CD14-positive monocyte (primary cell): ENCODE measurements at regions of chr12 and their contacts with region 1.

Region 1: DNA sequence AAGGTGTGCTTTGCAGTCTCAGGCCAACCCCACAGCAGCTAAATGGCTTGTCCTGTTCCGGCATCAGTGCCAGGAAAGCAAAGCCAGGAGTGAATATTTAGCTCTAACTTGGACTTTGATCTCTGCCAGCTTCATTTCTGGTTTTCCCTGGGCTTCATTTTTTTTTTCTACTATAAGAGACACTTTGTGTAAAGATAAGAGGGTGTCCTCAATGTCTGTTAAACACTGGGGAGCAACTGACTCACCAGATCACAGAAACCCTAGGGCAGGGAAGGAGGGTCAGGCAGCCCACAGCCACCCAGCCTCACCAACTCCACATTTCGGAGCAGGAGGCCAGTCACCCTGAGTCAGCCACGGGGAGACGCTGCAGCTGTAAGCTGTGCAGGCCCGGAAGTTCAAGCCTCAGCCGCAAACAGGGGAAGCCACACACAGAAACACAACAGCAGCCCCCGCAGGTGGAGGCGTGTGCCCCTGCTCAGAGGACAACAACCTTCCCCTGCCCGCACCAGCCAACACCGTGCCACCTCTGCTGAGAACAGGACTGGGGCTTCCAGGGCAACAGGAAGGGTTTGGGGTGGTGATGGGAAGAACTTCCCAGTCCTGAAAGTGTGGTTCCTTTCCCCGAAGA is 6.3 kb downstream of the TNFRSF1A start:
- DNase-seq: peak; percentile 77 to 88 (median 80)
- H3K4me3 ChIP-seq: peak overlapping the region; percentile 49 to 95 (median 90)
- H3K4me3 Mint-ChIP-seq: no peak overlapping the region
- H3K27ac ChIP-seq: peak overlapping the region; percentile 79 to 93
- H3K27ac Mint-ChIP-seq: no peak overlapping the region
- H3K4me1 ChIP-seq: peaks cover 90 to 97% of the 10 kb centered on the region in 2 donors
- H3K4me1 Mint-ChIP-seq: peaks cover 49% of the 10 kb centered on the region
- H3K27me3 ChIP-seq: no peaks in the 10 kb centered on the region
- H3K27me3 Mint-ChIP-seq: peaks cover 0 to 1% (median 0%) of the 10 kb centered on the region in 3 donors
- CTCF ChIP-seq: peak; percentile 58

Region 2: DNA sequence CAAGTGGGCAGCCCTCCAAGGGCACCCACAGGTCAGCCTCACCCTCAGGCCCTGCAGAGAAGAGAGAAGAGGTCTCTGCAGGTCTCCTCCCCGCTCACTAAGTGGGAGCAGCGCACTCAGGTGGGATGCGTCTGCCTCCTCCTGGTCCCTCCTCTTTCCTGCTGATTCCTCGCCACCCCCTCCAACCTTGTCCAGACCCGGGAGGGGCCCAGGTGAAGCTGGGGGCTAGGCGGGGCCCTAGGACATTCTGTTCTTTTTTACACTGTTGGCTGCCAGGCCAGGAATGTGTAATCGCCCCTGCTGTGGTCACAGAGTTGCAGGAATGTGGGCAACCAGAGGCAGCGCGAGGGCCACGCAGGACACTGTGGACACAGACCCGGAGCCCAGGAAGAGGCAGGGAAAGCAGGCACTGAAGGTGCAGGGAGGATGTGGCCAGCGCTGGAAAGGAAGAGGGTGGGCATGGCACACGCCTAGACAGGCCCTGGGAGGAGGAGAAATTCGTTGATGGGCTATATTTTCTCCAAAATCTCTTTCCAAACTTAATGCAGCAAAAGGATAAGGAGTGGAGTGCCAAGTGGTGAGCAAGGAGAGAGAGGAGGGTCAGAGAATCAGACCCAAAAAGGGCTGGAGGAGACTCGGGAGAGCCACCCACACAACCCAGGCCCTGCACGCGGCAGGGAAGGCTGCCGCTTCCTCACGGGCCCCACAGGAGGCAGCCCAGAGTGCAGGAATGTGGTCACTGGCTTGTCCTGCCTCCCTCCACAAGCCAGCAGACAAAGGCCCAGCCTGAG is 40.7 kb after region 1 on chr12:
- intact Hi-C with region 1: loop called (anchors 5 kb)
- DNase-seq: peak in 2 of 3 donors; percentile 33 to 40
- H3K4me3 ChIP-seq: peak overlapping the region in 1 of 3 experiments; percentile 34
- H3K4me3 Mint-ChIP-seq: peak overlapping the region; percentile 49 to 81
- H3K27ac ChIP-seq: peak overlapping the region in 1 of 2 donors; percentile 3
- H3K27ac Mint-ChIP-seq: peak overlapping the region in 4 of 7 donors; percentile 50 to 64 (median 56)
- H3K4me1 ChIP-seq: peaks cover 70 to 74% of the 10 kb centered on the region in 2 donors
- H3K4me1 Mint-ChIP-seq: peaks cover 73% of the 10 kb centered on the region
- H3K27me3 ChIP-seq: no peaks in the 10 kb centered on the region
- H3K27me3 Mint-ChIP-seq: peaks cover 2 to 5% (median 2%) of the 10 kb centered on the region in 3 donors
- CTCF ChIP-seq: peak; percentile 44